ENCODE measurements at regions of chr10 and their contacts with region 1.

Region 1: DNA sequence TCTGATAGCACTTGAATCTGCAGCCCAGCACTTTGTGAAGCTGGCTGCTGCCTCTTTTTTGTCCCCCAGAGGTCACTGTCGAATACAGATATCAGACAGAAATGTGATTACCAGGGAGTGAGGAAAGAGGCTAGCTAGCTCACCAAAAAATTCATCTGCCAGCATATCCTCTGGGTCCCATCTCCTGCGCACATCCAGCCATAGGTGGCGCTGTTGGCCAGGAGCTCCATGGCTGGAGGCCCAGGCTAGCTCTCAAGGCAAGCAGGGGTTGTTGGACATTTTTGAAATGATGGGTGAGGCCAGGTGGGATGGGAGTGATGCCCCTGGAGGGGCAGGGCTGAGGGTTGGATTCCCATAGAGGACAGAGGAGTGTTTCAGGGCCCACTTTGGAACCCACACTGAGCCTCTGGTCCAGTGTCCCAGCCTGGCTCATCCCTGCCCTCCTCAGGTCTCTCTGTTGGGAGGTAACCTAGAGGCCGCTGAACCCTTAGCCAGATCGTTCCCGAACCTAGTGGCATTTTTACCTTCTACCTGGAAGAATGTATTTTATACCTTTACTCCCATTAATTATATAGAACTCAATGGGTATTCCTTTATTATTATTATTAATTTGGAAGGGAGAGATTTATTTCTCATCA is 14.8 kb downstream of the DPCD start:
- DNase-seq: peak; percentile 57 to 97 (median 79)

Region 2: GRCh38 chr10:101646364-101646763 is 43.5 kb after region 1 on chr10:
- intact Hi-C with region 1: no loop called
- DNase-seq: peak; percentile 37 to 92 (median 56)

Region 3: GRCh38 chr10:101693978-101694673 is 91.2 kb after region 1 on chr10:
- intact Hi-C with region 1: loop called (anchors 10 kb)
- DNase-seq: peak; percentile 34 to 93 (median 65)

Region 4: DNA sequence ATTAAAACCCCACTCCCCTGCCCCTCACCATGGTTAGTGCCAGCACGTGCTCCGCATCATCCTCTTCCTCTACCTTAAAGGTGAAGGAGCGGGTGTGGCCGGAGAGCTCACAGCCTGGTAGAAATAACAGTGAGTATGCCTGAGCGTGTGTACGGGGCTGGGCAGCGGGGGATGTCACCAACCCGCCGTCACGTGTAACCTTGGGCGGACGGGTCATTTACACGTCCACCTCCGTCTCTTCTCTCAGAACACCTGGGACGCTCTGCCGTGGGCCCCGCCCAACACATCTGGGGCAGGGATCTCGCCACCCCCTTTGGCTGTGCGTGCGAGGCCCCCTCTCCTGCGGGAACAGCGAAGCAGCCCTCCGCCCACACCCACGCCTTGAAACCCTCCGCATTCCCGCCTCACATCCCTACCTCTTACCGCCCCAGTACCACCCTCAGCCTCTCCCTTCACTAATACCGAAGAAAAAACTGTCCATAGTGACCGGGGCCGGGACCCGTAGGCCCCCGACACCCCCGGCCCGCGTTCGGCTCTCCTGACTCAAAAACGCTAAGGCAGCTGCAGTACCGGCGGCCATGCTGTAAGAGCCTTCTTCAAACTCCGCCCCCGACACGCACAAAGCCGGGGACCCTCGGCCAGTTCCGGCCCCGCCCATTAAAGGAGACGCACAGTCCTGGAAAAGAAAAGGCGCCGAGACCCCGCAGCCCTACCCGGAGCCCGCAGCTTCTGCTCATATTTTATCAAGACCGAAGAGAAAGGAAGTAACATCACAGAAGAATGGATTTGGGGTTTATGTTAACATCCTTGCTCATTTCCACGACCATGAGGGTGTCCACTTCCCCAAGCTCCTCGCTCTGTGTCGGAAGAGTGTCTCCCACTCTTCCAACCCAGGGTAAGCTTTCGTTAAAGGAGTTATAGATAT is 180.2 kb after region 1 on chr10 and contains the start of gene NPM3:
- intact Hi-C with region 1: loop called (anchors 1 kb)
- DNase-seq: peak; percentile 67 to 98 (median 87)